ENCODE measurements at regions of chr12 and their contacts with region 1.

Region 1: DNA sequence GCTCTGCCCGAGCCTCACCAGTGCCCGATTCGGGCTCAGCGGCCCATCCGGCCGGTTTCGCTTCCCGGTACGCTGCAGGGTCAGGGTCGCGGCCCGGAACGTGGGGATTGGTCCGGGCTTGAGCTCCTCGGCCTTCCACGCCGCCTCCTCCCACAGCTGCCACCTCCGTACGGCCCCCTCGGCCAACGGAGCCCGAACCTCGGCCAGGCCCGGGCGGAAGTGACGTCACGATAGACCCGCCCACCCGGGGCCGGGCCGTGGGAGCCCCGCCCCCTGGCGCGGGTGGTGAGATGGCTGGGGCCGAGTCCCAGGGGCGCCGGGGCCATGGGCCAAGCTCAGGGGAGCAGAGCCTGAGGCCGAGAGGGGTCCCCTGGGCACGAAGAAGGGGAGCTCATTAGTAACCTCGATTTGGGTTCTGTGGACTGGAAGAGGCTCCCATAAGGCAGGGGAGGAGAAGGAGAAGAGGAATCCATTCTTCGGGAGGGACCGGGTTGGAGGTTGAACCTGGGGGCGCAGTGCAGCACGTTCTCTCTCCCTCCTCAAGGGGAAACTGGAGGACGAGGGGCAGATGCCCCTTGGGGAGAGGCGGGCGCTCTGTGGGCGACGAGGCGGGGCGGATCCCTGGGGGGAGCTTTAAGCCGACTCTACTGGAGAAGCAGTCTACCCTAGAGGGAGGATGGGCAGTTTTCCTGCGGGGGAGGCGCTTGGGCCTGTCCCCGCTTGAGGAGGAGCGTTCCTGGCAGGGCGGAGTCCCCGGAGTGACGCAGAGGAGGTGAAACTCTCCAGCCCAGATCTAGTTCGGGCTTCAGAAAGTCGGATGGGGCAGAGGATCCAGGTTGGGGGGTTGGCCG is at the start of gene MLF2:
- DNase-seq: peak; percentile 99
- ATAC-seq: peak; percentile 96
- H3K4me3 Mint-ChIP-seq: peak within 1 kb of the TSS; percentile 95
- H3K27ac Mint-ChIP-seq: peak within 1 kb of the TSS; percentile 98
- H3K4me1 Mint-ChIP-seq: peaks cover 26% of the 10 kb centered on the region
- H3K27me3 Mint-ChIP-seq: peaks cover 9% of the 10 kb centered on the region
- total RNA-seq, gene MLF2: 108 to 118 TPM

Region 2: DNA sequence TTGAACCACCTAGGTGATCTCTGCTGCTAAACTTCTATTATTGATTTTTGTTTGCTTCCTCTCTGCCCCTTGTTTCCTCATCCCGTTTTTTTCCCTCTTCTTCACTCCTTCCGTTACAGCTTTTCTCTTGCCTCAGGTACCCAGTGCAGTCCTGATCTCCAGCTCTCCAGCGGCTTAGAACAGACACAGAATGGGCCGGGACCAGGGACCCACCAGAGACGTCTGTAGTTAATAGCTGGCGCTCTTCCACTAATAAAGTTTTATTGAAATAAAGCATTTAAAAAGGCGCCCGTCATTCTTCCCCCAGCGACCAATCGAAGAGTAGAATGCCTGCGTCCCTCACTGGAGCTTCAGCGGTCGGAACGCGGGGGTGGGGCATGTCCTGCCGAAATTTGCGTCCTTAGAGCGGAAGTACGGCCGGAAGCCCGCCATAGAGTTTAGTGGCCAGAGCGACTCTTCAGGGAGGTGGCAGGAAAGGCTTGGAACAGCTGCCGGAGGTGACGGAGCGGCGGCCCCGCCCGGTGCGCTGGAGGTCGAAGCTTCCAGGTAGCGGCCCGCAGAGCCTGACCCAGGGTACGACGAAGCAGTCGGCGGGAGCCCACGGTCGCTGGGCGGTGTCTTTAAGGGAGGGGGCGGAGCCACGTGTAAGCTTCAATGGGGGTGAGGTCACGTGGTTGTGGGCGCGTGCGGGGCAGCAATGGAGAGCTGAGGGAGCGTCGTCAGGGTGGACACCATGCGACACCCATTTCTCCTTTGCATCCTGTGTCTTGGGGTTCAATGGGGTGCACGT is 29.3 kb before region 1 on chr12 and contains the start of gene COPS7A:
- POLR2A ChIA-PET with region 1: interaction called, 40 read pairs
- DNase-seq: peak; percentile 93
- ATAC-seq: peak; percentile 97
- H3K4me3 Mint-ChIP-seq: peak within 1 kb of the TSS; percentile 99
- H3K27ac Mint-ChIP-seq: peak within 1 kb of the TSS; percentile 99
- H3K4me1 Mint-ChIP-seq: peaks cover 22% of the 10 kb centered on the region
- H3K27me3 Mint-ChIP-seq: peaks cover 3% of the 10 kb centered on the region
- total RNA-seq, gene COPS7A: 29.8 to 35.6 TPM

Region 3: GRCh38 chr12:6766651-6767349 is 13.7 kb after region 1 on chr12:
- POLR2A ChIA-PET with region 1: interaction called, 32 read pairs
- DNase-seq: peak; percentile 80
- ATAC-seq: peak; percentile 72
- H3K4me3 Mint-ChIP-seq: peak overlapping the region; percentile 94
- H3K27ac Mint-ChIP-seq: peak overlapping the region; percentile 64
- H3K4me1 Mint-ChIP-seq: peaks cover 44% of the 10 kb centered on the region
- H3K27me3 Mint-ChIP-seq: peaks cover 45% of the 10 kb centered on the region

Region 4: GRCh38 chr12:6772331-6772695 is 19.2 kb after region 1 on chr12 and contains the start of gene LAG3:
- POLR2A ChIA-PET with region 1: interaction called, 43 read pairs
- DNase-seq: peak; percentile 59
- ATAC-seq: peak; percentile 35
- H3K4me3 Mint-ChIP-seq: peak within 1 kb of the TSS; percentile 88
- H3K27ac Mint-ChIP-seq: peak within 1 kb of the TSS; percentile 98
- H3K4me1 Mint-ChIP-seq: peaks cover 56% of the 10 kb centered on the region
- H3K27me3 Mint-ChIP-seq: peaks cover 9% of the 10 kb centered on the region
- total RNA-seq, gene LAG3: 46.6 to 52.1 TPM

Region 5: GRCh38 chr12:6778574-6779550 is 25.7 kb after region 1 on chr12:
- POLR2A ChIA-PET with region 1: interaction called, 43 read pairs
- DNase-seq: peak; percentile 88
- ATAC-seq: peak; percentile 72
- H3K4me3 Mint-ChIP-seq: peak overlapping the region; percentile 90
- H3K27ac Mint-ChIP-seq: peak overlapping the region; percentile 95
- H3K4me1 Mint-ChIP-seq: peaks cover 40% of the 10 kb centered on the region
- H3K27me3 Mint-ChIP-seq: no peaks in the 10 kb centered on the region

Region 6: GRCh38 chr12:6792522-6793201 is 39.5 kb after region 1 on chr12:
- POLR2A ChIA-PET with region 1: interaction called, 11 read pairs
- DNase-seq: peak; percentile 57
- ATAC-seq: peak; percentile 94
- H3K4me3 Mint-ChIP-seq: peak overlapping the region; percentile 58
- H3K27ac Mint-ChIP-seq: peak overlapping the region; percentile 44
- H3K4me1 Mint-ChIP-seq: peaks cover 28% of the 10 kb centered on the region
- H3K27me3 Mint-ChIP-seq: peaks cover 41% of the 10 kb centered on the region

Region 7: GRCh38 chr12:6813363-6813762 is 60.2 kb after region 1 on chr12:
- POLR2A ChIA-PET with region 1: no interaction called
- DNase-seq: no peak
- ATAC-seq: no peak
- H3K4me3 Mint-ChIP-seq: no peak overlapping the region
- H3K27ac Mint-ChIP-seq: no peak overlapping the region
- H3K4me1 Mint-ChIP-seq: no peaks in the 10 kb centered on the region
- H3K27me3 Mint-ChIP-seq: peaks cover 33% of the 10 kb centered on the region